ENCODE measurements at regions of chr7 and their contacts with region 1.

Region 1: DNA sequence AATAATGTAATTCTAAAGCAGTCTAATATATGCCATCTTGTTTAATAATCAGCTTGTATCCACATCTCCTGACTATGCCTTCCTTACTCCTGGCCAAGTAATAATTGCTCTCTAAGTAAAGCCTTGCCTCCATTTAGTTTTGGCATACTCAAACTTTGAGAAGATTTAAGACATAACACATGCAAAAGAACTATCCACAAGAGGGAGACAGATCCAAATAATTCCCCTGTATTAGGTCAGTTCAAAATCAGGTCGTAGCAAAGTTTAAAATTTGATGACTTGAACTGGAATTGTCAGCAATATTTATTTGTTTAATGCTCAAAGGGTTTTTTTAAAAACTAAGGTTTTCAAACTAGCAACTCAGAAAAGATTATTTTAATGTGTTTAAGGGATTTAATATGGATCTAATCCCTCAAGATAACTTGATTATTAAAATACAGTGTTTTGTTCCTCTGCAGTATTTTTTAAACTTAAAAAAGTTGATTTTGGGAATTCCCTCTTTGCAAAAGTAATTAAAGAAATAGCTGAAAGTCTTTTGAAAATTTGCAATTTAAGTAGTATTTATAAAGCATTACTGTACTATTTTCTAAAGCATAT is 95.3 kb downstream of the HDAC9 start:
- DNase-seq: no peak
- H3K4me3 ChIP-seq: no peak overlapping the region
- H3K27ac ChIP-seq: no peak overlapping the region
- H3K27me3 ChIP-seq: no peaks in the 10 kb centered on the region
- CTCF ChIP-seq: peak; percentile 75

Region 2: DNA sequence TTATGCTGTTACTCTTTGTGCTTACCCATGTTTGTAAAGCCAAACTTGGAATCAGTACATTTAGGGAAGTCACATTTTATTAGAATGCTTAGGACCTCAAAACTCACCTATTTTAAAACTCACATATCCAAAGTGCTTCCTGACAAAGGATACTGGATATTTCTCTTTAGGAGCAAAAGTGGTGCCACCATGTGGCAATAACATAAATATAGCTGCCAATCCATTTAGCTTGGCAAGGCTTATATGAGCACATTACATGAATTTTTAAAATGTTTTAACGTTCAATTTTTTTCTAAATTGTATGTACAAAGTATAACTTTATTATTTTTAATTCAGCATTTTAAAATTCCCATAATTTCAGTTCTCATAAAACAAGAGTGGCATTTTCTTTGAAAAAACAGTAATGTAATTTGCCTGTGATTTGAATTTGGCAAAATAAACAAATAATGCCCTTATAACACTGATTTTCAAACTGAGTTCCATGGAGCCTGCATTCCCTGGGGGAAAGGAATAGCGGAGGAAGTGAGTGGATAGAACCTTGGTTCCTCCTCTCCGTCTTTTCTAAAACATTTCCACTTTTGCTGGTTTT is 19.9 kb before region 1 on chr7:
- CTCF ChIA-PET with region 1: interaction called, 16 read pairs
- POLR2A ChIA-PET with region 1: no interaction called
- DNase-seq: no peak
- H3K4me3 ChIP-seq: no peak overlapping the region
- H3K27ac ChIP-seq: no peak overlapping the region
- H3K27me3 ChIP-seq: no peaks in the 10 kb centered on the region
- CTCF ChIP-seq: peak; percentile 49

Region 3: GRCh38 chr7:19665399-19666008 is 1074.7 kb after region 1 on chr7:
- CTCF ChIA-PET with region 1: interaction called, 10 read pairs
- POLR2A ChIA-PET with region 1: no interaction called
- DNase-seq: peak; percentile 1
- H3K4me3 ChIP-seq: no peak overlapping the region
- H3K27ac ChIP-seq: no peak overlapping the region
- H3K27me3 ChIP-seq: no peaks in the 10 kb centered on the region
- CTCF ChIP-seq: peak; percentile 67